Sciatic nerve (tissue), 2 donors: ENCODE measurements at regions of chr10 and their contacts with region 1.

Region 1: GRCh38 chr10:89053555-89053954 is 63.0 kb downstream of the FAS start:
- DNase-seq: no peak
- ATAC-seq: peak; percentile 26

Region 2: DNA sequence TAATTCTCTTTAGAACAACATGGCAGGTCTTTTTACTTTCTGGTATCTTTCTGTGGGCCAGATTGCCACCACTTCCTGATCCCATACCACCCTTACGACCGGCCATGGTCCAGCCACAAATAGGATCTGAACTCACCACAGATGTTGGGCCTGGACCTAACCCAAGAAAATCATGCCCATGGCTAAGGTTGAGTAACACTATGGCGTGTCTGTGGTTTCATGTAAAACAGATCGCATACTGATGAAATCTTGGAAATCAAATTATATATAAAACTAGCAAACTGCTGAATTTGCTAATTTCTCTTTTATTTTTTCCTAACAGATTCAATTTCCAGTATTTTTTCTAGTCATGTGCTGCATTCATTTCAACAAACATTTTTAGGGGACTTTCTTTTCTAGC is 76.4 kb after region 1 on chr10:
- intact Hi-C with region 1: loop called (anchors 2 kb)
- DNase-seq: peak; percentile 64
- ATAC-seq: peak; percentile 85